MCF 10A (cell line): ENCODE measurements at regions of chr4 and their contacts with region 1.

Region 1: GRCh38 chr4:125244848-125245450 is 69.8 kb upstream of the FAT4 start:
- DNase-seq: peak; percentile 27
- H3K4me3 Mint-ChIP-seq: no peak overlapping the region
- H3K27ac Mint-ChIP-seq: no peak overlapping the region
- H3K4me1 Mint-ChIP-seq: peaks cover 5% of the 10 kb centered on the region
- H3K27me3 Mint-ChIP-seq: no peaks in the 10 kb centered on the region
- CTCF ChIP-seq: peak; percentile 44

Region 2: DNA sequence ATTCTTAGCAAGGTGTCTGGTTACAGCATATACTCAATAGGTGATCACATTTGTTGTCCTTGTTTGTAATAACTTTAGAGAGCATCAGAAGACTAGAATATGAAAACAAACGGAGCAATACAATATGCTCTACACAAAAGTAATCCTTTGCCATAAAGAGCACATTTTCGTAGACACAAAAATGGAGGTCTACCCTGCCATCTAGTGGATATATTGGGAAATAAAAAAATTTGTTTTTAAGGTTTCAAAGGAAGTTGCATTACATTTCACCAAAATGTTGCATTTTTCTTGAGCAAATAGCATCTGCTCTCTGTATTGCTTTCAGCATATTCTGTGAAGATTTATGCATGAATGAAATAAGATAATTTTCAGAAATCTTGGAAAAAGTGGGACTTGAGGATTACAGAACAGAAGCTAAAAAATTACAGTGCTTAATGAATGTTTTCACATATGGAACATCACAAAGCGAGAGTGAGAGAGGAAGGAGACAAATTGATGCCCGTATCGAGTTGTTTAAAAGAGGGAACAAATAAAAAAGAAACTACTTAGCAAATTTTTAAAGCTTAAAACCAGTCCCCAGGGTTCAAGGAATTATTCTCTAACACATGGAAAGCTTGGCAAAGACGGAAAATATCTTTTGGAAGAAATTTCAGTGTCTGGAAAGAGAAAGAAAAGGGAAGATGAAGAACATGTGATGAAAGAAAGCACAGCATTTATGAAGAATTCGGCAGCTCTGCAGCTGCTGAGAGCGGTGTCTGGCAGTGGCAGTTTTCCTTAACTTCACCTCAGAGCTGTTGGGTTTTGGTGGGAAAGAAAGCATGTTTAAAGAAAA is 922.5 kb before region 1 on chr4:
- CTCF ChIA-PET with region 1: interaction called, 10 read pairs
- POLR2A ChIA-PET with region 1: no interaction called
- intact Hi-C with region 1: no loop called
- DNase-seq: peak; percentile 59
- H3K4me3 Mint-ChIP-seq: no peak overlapping the region
- H3K27ac Mint-ChIP-seq: no peak overlapping the region
- H3K4me1 Mint-ChIP-seq: no peaks in the 10 kb centered on the region
- H3K27me3 Mint-ChIP-seq: no peaks in the 10 kb centered on the region
- CTCF ChIP-seq: peak; percentile 52

Region 3: DNA sequence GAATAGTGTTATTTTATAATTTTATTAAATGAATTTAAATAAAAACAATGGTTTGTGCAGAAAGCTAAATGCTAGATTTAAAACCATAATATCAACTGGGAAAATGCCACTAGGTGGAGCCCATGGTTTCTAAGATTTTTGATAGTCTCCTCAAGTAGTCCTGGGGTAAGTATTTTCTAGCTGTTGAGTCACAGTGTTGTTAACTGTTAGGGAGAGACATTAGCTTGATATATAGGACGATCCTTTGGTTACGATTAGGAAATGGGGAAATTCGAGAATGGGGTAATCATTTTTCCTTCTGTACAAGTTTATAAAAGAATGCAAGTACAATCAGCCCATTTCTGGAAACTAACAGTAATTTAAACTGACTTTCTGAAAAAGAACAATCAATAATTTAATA is 910.8 kb before region 1 on chr4:
- CTCF ChIA-PET with region 1: interaction called, 16 read pairs
- POLR2A ChIA-PET with region 1: interaction called, 3 read pairs
- intact Hi-C with region 1: loop called (anchors 1 kb)
- DNase-seq: peak; percentile 81
- H3K4me3 Mint-ChIP-seq: peak overlapping the region; percentile 23
- H3K27ac Mint-ChIP-seq: no peak overlapping the region
- H3K4me1 Mint-ChIP-seq: peaks cover 5% of the 10 kb centered on the region
- H3K27me3 Mint-ChIP-seq: no peaks in the 10 kb centered on the region
- CTCF ChIP-seq: peak; percentile 64

Region 4: DNA sequence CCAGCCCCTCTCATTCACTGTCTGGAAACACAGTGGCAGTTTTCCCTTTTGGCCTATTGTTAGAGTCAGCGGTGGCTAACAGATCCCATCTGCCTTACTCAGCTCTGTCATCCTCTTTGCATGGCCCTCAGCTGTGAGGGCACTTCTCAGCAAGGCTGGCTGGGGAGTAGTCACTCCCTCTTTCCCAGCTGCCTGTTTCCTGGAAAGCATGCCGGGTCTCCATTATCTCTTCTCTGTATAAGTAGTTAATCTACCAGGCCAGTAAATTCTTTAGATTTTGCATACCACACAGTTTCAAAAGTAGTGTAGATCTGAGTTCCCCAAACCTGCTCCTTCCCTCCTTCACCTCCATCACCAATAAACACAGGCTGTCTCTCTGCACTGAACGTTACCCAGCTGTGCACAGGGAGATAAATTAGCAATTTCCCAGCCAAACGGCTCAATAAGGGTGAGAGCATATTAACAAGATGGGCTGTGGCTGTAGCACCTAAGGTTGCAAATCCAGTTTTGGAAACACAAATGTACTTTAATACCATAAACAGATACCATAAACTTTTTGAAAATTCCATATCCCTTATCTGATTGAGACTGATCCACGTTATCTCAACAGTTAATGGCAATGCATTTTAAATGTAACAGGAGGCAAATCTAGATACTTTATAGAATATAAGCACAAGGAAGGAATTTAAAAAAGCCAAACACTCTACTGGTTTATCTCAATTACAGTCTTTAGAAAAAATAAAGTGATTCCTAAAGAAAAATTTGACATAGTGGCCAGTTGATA is 761.6 kb before region 1 on chr4:
- CTCF ChIA-PET with region 1: no interaction called
- POLR2A ChIA-PET with region 1: no interaction called
- intact Hi-C with region 1: loop called (anchors 10 kb)
- DNase-seq: no peak
- H3K4me3 Mint-ChIP-seq: no peak overlapping the region
- H3K27ac Mint-ChIP-seq: no peak overlapping the region
- H3K4me1 Mint-ChIP-seq: no peaks in the 10 kb centered on the region
- H3K27me3 Mint-ChIP-seq: no peaks in the 10 kb centered on the region
- CTCF ChIP-seq: no peak

Region 5: GRCh38 chr4:124940387-124940786 is 304.6 kb before region 1 on chr4:
- CTCF ChIA-PET with region 1: no interaction called
- POLR2A ChIA-PET with region 1: no interaction called
- intact Hi-C with region 1: loop called (anchors 5 kb)
- DNase-seq: peak; percentile 90
- H3K4me3 Mint-ChIP-seq: no peak overlapping the region
- H3K27ac Mint-ChIP-seq: peak overlapping the region; percentile 90
- H3K4me1 Mint-ChIP-seq: peaks cover 50% of the 10 kb centered on the region
- H3K27me3 Mint-ChIP-seq: no peaks in the 10 kb centered on the region
- CTCF ChIP-seq: no peak

Region 6: DNA sequence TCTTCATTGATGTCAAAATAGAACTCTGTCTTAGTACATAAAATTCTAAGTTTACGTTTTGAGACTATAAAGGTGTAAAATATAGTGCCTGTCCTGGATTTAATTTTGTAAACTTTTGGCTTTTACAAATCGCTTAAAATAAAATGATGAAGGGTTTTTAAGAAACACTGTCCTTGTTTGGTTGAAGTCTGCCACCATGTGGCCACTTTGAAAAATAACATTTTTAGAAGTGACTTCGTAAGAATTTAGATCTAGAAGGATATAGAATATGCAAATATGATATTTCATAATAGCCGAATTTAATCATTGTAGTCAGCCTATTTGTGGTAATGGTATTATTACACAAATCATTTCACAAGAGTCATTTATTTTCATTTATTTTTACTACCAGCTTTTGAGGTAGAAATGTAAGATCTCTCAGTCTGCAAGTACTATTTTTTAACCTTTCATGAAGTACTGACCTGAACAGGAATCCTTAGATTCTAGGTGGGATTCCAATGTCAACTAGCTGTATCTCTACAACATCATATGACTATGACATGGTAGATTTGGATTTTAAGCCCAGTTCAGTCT is 38.8 kb after region 1 on chr4:
- CTCF ChIA-PET with region 1: interaction called, 11 read pairs
- POLR2A ChIA-PET with region 1: no interaction called
- intact Hi-C with region 1: loop called (anchors 1 kb)
- DNase-seq: peak; percentile 57
- H3K4me3 Mint-ChIP-seq: no peak overlapping the region
- H3K27ac Mint-ChIP-seq: no peak overlapping the region
- H3K4me1 Mint-ChIP-seq: peaks cover 5% of the 10 kb centered on the region
- H3K27me3 Mint-ChIP-seq: no peaks in the 10 kb centered on the region
- CTCF ChIP-seq: peak; percentile 60

Region 7: DNA sequence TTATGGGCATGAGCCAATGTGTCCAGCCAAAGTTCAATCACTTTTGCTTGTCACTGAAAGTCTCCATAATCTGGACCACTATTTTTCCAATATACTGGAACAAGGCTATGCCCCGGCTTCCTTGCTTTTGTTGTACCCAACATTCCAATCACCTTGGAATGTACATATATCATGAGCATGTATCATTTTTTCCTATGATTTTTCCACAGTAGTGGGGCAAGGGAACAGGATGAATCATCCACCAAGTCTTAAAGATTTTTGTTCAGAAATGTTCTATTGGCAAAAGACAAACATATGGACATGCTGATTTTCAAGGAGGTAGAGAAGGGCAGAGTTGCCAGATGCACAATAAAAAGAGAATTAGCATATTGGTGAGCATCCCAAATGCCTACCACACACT is 1839.7 kb after region 1 on chr4:
- CTCF ChIA-PET with region 1: no interaction called
- POLR2A ChIA-PET with region 1: no interaction called
- intact Hi-C with region 1: no loop called
- DNase-seq: no peak
- H3K4me3 Mint-ChIP-seq: no peak overlapping the region
- H3K27ac Mint-ChIP-seq: no peak overlapping the region
- H3K4me1 Mint-ChIP-seq: no peaks in the 10 kb centered on the region
- H3K27me3 Mint-ChIP-seq: no peaks in the 10 kb centered on the region
- CTCF ChIP-seq: no peak